PC-3 (cell line): ENCODE measurements at regions of chr1 and their contacts with region 1.

Region 1: DNA sequence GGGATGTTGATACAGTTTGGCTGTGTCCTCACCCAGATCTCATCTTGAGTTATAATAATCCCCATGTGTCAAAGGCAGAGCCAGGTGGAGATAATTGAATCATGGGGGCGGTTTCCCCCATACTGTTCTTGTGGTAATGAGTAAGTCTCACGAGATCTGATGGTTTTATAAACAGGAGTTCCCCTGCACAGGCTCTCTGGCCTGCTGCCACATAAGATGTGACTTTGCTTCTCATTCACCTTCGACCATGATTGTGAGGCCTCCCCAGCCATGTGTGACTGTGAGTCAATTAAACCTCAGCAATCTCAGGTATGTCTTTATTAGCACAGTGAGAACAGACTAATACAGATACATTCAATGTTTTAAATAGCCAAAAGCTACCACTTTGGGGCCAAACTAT is 41.1 kb downstream of the SLC35F3 start:
- DNase-seq: peak; percentile 75
- ATAC-seq: peak; percentile 80
- H3K4me3 ChIP-seq: no peak overlapping the region
- H3K27ac ChIP-seq: peak overlapping the region; percentile 28
- H3K4me1 ChIP-seq: peaks cover 9% of the 10 kb centered on the region; the same call in 1 of the 2 replicates
- H3K27me3 ChIP-seq: no peaks in the 10 kb centered on the region
- CTCF ChIP-seq: no peak

Region 2: GRCh38 chr1:233246965-233247364 is 698.6 kb before region 1 on chr1:
- CTCF ChIA-PET with region 1: no interaction called
- POLR2A ChIA-PET with region 1: interaction called, 10 read pairs
- intact Hi-C with region 1: no loop called
- DNase-seq: no peak
- ATAC-seq: no peak
- H3K4me3 ChIP-seq: no peak overlapping the region
- H3K27ac ChIP-seq: no peak overlapping the region
- H3K4me1 ChIP-seq: no peaks in the 10 kb centered on the region
- H3K27me3 ChIP-seq: no peaks in the 10 kb centered on the region
- CTCF ChIP-seq: no peak

Region 3: DNA sequence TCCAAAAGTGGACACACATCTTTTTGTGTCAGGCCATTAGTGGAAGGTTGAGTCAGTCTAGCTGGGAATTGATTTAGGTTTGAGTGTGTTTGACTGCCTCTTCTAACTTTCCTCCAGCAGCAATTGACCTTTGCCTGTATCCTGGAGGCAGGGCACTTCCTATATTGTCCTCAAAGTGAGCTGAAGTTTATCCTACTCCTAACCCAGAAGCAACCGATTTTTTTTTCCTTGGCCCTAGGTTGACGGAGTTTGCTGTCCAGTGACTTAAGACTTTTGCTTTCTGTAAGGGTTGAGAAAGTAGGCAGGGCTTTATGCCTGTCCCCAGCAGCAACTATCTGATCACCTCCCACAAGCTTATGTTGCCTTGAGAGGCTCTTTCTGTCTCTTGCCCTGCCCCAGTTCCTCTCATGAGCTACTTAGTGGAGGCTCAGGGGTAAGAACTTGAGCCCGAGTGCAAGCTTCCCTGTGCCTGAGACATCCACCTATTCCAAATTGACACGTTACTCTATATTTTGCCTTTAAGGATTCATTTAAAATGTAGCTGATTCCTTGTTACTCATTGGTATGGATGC is 10.2 kb before region 1 on chr1:
- CTCF ChIA-PET with region 1: no interaction called
- POLR2A ChIA-PET with region 1: interaction called, 15 read pairs
- intact Hi-C with region 1: no loop called
- DNase-seq: no peak
- ATAC-seq: no peak
- H3K4me3 ChIP-seq: no peak overlapping the region
- H3K27ac ChIP-seq: no peak overlapping the region
- H3K4me1 ChIP-seq: no peaks in the 10 kb centered on the region
- H3K27me3 ChIP-seq: no peaks in the 10 kb centered on the region
- CTCF ChIP-seq: no peak